ENCODE measurements at regions of chr6 and their contacts with region 1.

Region 1: GRCh38 chr6:138428944-138429598 is 25.0 kb downstream of the HEBP2 start:
- DNase-seq: no peak
- ATAC-seq: peak in 5 of 8 donors; percentile 32 to 55 (median 39)
- H3K4me3 ChIP-seq: peak overlapping the region in 5 of 10 donors; percentile 1 to 23 (median 18)
- H3K27ac ChIP-seq: peak overlapping the region in 9 of 10 donors; percentile 17 to 83 (median 55)
- H3K4me1 ChIP-seq: peaks cover 0 to 59% (median 32%) of the 10 kb centered on the region in 9 donors
- H3K27me3 ChIP-seq: no peaks in the 10 kb centered on the region
- CTCF ChIP-seq: peak; percentile 36 to 80 (median 61)

Region 2: GRCh38 chr6:138509371-138509770 is 80.3 kb after region 1 on chr6:
- intact Hi-C with region 1: loop called in 9 of 10 experiments (anchors 2 to 10 kb)
- DNase-seq: peak in 1 of 2 donors; percentile 53
- ATAC-seq: peak in 5 of 8 donors; percentile 51 to 68 (median 64)
- H3K4me3 ChIP-seq: no peak overlapping the region
- H3K27ac ChIP-seq: no peak overlapping the region
- H3K4me1 ChIP-seq: peaks cover 0 to 41% (median 9%) of the 10 kb centered on the region in 9 donors
- H3K27me3 ChIP-seq: no peaks in the 10 kb centered on the region
- CTCF ChIP-seq: peak; percentile 11 to 67 (median 56)

Region 3: GRCh38 chr6:138517635-138518034 is 88.6 kb after region 1 on chr6:
- intact Hi-C with region 1: loop called in 6 of 10 experiments (anchors 5 to 10 kb)
- DNase-seq: peak in 1 of 2 donors; percentile 22
- ATAC-seq: peak in 2 of 8 donors; percentile 37 to 47
- H3K4me3 ChIP-seq: no peak overlapping the region
- H3K27ac ChIP-seq: no peak overlapping the region
- H3K4me1 ChIP-seq: peaks cover 0 to 67% (median 13%) of the 10 kb centered on the region in 9 donors
- H3K27me3 ChIP-seq: no peaks in the 10 kb centered on the region
- CTCF ChIP-seq: peak; percentile 12 to 66 (median 53)

Region 4: DNA sequence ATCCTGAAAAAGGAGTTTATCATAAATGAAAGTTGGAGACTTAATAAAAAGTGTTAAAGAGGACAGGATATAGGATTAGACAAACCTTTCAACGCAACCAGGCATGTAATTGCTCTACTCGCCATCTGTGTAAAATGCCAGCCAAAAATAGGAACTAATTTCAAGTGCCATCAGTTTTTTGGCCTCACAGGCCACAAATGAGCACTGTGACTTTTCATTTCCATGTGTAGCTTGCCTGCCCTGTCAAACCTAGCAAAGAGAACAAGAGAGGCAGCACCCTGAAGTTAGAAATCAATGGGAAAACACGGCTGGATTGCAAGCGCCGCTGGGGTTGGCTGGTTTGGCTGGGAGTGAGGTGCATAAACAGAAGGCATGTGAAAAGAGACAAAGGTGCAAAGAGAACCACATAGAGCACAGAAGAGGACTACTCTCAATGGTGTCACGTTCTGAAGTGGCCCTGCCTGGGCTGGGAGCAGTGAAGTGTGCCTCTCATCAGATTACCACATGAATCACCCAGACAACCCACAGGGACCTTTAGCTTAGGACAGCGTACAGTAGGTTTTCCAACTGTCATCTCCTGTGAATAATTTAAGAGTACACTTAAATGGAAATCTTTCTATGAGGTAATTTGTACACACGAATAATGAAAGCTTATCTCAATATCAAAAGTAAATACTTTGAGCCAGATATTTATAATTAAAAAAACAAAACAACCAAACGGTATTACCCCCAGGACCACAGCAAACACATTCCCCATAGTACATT is 148.3 kb after region 1 on chr6:
- intact Hi-C with region 1: loop called in 2 of 10 experiments (anchors 5 kb)
- DNase-seq: no peak
- ATAC-seq: peak in 5 of 8 donors; percentile 43 to 88 (median 63)
- H3K4me3 ChIP-seq: no peak overlapping the region
- H3K27ac ChIP-seq: peak overlapping the region in 7 of 10 donors; percentile 19 to 63 (median 28)
- H3K4me1 ChIP-seq: peaks cover 0 to 24% (median 3%) of the 10 kb centered on the region in 9 donors
- H3K27me3 ChIP-seq: peaks cover 0 to 3% (median 0%) of the 10 kb centered on the region in 7 donors
- CTCF ChIP-seq: no peak

Region 5: GRCh38 chr6:138588805-138589434 is 159.8 kb after region 1 on chr6:
- intact Hi-C with region 1: loop called (anchors 2 to 5 kb)
- DNase-seq: peak in 1 of 2 donors; percentile 73
- ATAC-seq: peak in 7 of 8 donors; percentile 39 to 68 (median 52)
- H3K4me3 ChIP-seq: no peak overlapping the region
- H3K27ac ChIP-seq: no peak overlapping the region
- H3K4me1 ChIP-seq: peaks cover 0 to 31% (median 8%) of the 10 kb centered on the region in 9 donors
- H3K27me3 ChIP-seq: no peaks in the 10 kb centered on the region
- CTCF ChIP-seq: peak; percentile 75 to 97 (median 92)

Region 6: DNA sequence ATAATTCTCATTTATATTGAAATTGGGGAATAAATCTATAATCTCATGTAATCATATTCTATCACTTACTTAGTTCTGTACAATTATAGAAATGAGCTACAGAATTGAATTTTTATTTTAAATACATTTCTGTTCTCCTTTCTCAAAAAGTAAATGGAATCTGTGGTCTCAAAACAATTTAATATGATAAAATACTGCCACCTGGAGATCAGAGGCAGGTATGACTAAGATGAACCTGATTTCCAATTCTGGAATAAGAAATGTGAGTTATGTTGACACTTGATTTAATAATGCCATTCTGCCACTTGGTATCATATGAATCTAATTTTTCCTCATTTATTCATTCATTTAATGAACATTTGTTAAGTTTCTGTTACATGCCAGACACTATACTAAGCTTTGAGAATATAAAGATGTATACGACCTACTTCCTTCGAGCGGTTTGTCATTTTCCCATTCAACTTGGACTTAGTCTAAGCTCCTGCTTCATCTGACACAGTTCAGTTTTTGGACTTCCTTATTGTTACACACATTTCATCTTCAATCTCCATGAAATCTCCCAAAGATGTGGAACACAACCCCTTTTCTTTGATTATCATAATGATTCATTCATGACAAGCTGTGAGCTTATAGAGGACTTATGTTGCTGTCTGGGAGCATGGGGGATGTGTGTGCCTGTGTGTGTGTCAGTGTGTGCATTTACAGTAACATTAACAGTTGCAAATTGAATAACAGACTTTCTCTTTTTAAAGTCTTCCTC is 337.0 kb after region 1 on chr6:
- intact Hi-C with region 1: loop called in 9 of 10 experiments (anchors 2 to 10 kb)
- DNase-seq: no peak
- ATAC-seq: no peak
- H3K4me3 ChIP-seq: no peak overlapping the region
- H3K27ac ChIP-seq: no peak overlapping the region
- H3K4me1 ChIP-seq: no peaks in the 10 kb centered on the region
- H3K27me3 ChIP-seq: no peaks in the 10 kb centered on the region
- CTCF ChIP-seq: peak; percentile 34 to 86 (median 70)

Region 7: DNA sequence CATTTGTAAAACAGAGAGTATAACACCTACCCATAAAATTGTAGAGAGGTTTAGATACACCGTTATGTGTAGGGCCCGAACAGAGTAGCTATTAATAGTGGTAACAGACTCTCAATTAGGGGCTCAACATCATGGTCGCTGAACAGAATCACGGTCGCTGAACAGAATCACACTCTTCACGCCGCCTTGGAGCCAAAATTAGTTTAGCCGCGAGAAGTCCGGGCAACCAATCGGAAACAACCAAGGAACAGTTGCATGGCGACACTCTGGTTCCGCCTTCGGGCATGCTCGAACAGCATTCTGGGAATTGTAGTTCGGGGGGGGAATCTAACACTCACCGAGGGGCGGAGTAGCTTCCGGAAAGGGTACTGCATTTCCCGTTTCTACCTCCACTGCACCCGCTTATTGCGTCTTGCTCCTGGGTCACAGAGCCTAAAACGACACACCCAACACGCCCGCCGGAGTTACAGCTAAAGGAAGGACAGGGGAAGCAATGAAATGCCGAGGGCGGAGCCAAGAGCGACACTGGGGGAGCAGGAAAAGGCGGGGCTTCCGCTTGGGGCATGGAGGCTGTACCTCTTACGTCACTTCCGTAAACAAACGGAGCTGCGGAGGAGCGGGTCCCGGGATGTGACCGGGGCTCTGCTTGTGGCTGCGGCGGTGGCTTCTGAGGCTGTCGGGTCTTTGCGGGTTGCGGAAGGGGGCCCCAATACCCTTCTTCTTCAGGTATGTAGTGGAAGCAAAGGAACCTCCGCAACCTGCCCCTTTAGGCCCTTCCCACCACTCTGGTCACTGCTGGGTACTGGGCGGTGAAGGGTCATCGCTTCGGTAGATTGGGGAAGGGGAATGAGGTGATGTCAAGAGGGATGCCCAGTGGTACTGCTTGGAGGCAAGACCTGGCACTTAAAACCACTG is 344.4 kb after region 1 on chr6 and contains the start of gene CCDC28A:
- intact Hi-C with region 1: loop called in 7 of 10 experiments (anchors 5 to 10 kb)
- DNase-seq: peak; percentile 91 to 96
- ATAC-seq: peak; percentile 97 to 99 (median 98)
- H3K4me3 ChIP-seq: peak within 1 kb of the TSS; percentile 69 to 96 (median 84)
- H3K27ac ChIP-seq: peak within 1 kb of the TSS; percentile 90 to 99 (median 96)
- H3K4me1 ChIP-seq: peaks cover 2 to 30% (median 22%) of the 10 kb centered on the region in 9 donors
- H3K27me3 ChIP-seq: no peaks in the 10 kb centered on the region
- CTCF ChIP-seq: peak in 1 of 9 donors; percentile 9
- total RNA-seq, gene CCDC28A: 4.9 to 15.6 (median 9.5) TPM